ENCODE measurements at regions of chr12 and their contacts with region 1.

Region 1: GRCh38 chr12:105053116-105053572 is 31.1 kb downstream of the ALDH1L2 start:
- DNase-seq: peak; percentile 86 to 90
- H3K4me3 ChIP-seq: no peak overlapping the region
- H3K27ac ChIP-seq: no peak overlapping the region
- H3K4me1 ChIP-seq: peaks cover 0 to 9% (median 2%) of the 10 kb centered on the region in 4 donors
- H3K27me3 ChIP-seq: no peaks in the 10 kb centered on the region
- CTCF ChIP-seq: peak in 6 of 7 experiments; percentile 6 to 94 (median 90)
- EP300 ChIP-seq: no peak
- POLR2A ChIP-seq: no peak

Region 2: GRCh38 chr12:104596134-104596799 is 456.9 kb before region 1 on chr12:
- intact Hi-C with region 1: no loop called
- DNase-seq: peak in 1 of 2 donors; percentile 50
- H3K4me3 ChIP-seq: no peak overlapping the region
- H3K27ac ChIP-seq: peak overlapping the region in 2 of 5 donors; percentile 32 to 49
- H3K4me1 ChIP-seq: peaks cover 7 to 60% (median 35%) of the 10 kb centered on the region in 4 donors
- H3K27me3 ChIP-seq: no peaks in the 10 kb centered on the region
- CTCF ChIP-seq: no peak
- EP300 ChIP-seq: no peak
- POLR2A ChIP-seq: no peak

Region 3: DNA sequence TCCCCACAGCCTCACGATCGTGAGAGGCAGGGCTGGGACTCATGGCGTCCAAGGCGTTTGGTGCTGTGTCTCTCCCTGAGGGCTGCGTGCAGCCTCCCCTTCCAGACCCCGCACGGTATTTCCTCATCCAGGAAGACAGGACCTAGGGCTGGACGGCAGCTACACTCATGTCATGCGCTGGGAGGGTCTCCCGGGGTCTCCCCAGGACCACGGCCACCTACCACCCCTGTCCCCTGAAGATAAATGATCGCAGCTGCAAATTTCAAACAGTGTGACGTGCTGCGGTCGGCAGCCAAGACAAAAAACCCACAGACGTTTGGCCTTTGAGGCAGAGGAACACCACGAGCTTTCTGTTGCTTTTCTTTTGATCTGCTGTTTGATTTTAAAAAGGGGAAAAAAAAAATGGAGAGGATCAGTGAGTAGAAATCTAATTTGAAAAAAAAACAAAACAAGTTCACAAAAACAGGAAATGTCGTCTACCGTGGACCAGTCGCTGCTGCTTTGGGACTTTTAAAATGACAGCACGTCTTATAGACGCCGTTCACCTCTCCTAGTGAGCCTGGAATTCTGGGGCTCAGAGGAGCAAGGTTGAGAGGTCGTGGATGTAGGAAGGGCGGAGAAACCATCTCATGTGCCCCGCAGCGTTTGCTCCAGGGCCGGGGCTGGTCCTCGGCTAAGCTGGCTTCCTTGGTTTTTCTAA is 332.7 kb before region 1 on chr12:
- intact Hi-C with region 1: loop called (anchors 10 kb)
- DNase-seq: peak; percentile 40 to 74
- H3K4me3 ChIP-seq: peak overlapping the region; percentile 14 to 30 (median 19)
- H3K27ac ChIP-seq: peak overlapping the region; percentile 61 to 82 (median 77)
- H3K4me1 ChIP-seq: peaks cover 10 to 46% (median 31%) of the 10 kb centered on the region in 4 donors
- H3K27me3 ChIP-seq: no peaks in the 10 kb centered on the region
- CTCF ChIP-seq: no peak
- EP300 ChIP-seq: no peak
- POLR2A ChIP-seq: no peak

Region 4: DNA sequence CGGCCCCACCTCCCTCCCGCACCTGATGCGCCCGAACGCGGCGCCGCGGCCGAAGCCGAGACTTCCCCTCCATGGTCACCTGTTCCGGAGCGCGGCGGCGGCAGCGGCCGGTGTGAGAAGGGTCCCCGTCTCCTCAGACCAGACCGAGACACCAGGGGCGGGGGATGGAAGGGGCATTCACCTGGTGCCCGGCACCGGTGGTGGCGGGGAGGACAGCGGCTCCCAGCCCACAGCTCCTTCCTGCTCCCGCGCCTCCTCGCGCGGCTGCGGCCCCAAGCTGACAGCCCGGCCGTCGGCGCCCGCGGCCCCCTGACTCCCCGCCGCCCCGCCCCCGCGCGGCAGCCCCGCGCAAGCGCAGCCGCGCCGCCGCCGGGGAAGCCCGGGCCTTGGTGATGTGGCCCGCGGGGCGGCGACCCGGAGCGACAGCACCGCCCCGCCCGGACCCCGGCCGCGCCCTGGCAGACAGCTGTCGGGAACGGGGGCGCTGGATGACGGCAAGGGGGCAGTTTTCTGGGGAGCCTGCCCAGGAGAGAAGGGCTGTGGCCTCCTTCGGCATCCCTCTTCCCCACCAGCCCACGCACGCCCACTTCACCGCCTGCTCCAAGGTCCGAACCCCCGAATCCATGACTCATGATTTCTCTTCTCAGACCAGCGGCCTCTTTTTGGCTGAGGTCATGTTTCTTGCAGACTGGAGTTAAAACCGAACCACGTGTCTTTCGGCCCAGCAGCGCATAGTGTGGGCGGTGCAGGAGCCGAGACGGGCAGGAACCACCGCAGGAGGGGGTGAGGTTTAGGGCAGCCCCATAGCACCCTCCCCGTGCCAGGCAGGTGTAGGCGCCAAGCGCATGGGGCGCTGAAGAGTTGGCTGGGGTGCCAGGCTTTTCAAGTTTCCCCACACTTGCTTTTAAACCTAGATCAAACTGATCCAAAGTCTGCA is 94.9 kb before region 1 on chr12 and contains the start of gene SLC41A2:
- intact Hi-C with region 1: no loop called
- DNase-seq: peak; percentile 88 to 91
- H3K4me3 ChIP-seq: peak within 1 kb of the TSS; percentile 77 to 91 (median 90)
- H3K27ac ChIP-seq: peak within 1 kb of the TSS; percentile 91 to 97 (median 95)
- H3K4me1 ChIP-seq: peaks cover 15 to 45% (median 43%) of the 10 kb centered on the region in 4 donors
- H3K27me3 ChIP-seq: no peaks in the 10 kb centered on the region
- CTCF ChIP-seq: peak in 3 of 7 experiments; percentile 12 to 78 (median 27)
- EP300 ChIP-seq: no peak
- POLR2A ChIP-seq: no peak
- total RNA-seq, gene SLC41A2: 26.8 to 208 (median 181) TPM